GM18951 (cell line): ENCODE measurements at regions of chr13 and their contacts with region 1.

Region 1: DNA sequence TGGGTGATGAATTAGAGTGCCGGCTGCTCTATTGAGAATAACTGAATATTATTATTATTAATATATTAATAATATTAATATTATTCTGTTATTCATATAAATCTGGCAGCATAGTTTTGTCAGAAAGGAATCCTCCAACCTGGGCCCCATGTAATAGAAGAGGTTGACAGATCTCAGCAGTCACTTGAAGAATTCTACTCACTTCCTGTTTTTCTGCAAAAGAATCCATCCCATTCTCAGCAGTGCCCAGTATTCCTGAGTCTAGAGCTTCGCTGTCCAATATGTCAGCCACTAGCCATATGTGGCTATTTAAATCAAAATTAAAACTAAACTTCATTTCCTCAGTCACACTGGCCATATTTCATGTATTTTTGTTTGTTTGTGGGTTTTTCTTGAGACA is 72.4 kb upstream of the USPL1 start:
- POLR2A ChIP-seq: no peak

Region 2: GRCh38 chr13:30346153-30346788 is 199.0 kb before region 1 on chr13:
- in situ Hi-C with region 1: no loop called
- POLR2A ChIP-seq: no peak

Region 3: DNA sequence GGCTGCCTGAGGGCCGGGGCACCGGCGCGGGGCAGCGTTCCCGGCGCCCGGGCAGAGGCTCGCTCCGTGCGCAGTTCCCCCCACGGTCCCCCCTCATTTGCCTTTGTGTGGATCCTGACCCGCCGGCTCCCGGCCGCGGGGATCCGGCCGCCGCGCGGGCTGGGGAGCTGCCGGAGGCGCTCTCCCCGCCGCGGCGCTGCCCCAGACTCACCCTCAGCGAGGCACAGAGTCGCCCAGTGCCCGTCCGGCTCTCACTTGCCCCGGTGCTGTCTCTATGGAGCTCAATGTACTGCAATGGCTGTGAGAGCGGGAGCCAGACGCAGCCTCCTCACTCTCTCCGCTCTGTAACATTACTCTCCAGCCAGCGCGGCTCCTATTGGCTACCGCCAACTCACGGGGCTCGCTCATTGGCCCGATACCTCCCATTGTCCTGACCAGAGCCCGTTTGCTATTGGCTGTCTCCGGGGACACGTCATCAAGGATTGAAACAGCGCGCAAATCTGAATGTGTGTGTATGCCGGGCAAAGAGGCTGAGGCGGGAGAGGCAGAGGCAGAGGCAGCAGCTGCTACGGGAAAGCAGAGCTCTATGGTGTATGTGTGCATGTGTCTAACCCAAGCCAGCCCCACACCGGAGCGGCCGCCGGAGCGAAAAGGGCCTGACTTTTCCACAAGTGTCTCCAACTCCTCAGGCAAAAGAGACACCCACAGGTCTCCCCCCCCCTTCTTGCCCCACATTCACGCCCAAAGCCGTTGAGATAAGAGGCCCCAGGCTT is 79.5 kb before region 1 on chr13 and contains the start of gene HMGB1:
- in situ Hi-C with region 1: loop called (anchors 5 kb)
- POLR2A ChIP-seq: peak; percentile 90

Region 4: GRCh38 chr13:30905932-30906383 is 360.6 kb after region 1 on chr13 and contains the start of gene MEDAG:
- in situ Hi-C with region 1: no loop called
- POLR2A ChIP-seq: no peak